Naive thymus-derived CD4-positive, alpha-beta T cell (primary cell): ENCODE measurements at regions of chr7 and their contacts with region 1.

Region 1: GRCh38 chr7:44973610-44974401 is 5.0 kb downstream of the MYO1G start:
- DNase-seq: peak in 7 of 9 donors; percentile 52 to 70 (median 66)
- ATAC-seq: peak; percentile 31
- H3K4me3 ChIP-seq: no peak overlapping the region
- H3K4me3 Mint-ChIP-seq: peak overlapping the region in 4 of 10 donors; percentile 5 to 23 (median 10)
- H3K27ac ChIP-seq: peak overlapping the region; percentile 83
- H3K27ac Mint-ChIP-seq: peak overlapping the region in 8 of 9 donors; percentile 18 to 88 (median 67)
- H3K4me1 ChIP-seq: peaks cover 28 to 46% of the 10 kb centered on the region in 2 donors
- H3K4me1 Mint-ChIP-seq: peaks cover 29 to 59% (median 40%) of the 10 kb centered on the region in 7 donors
- H3K27me3 ChIP-seq: no peaks in the 10 kb centered on the region
- H3K27me3 Mint-ChIP-seq: no peaks in the 10 kb centered on the region

Region 2: DNA sequence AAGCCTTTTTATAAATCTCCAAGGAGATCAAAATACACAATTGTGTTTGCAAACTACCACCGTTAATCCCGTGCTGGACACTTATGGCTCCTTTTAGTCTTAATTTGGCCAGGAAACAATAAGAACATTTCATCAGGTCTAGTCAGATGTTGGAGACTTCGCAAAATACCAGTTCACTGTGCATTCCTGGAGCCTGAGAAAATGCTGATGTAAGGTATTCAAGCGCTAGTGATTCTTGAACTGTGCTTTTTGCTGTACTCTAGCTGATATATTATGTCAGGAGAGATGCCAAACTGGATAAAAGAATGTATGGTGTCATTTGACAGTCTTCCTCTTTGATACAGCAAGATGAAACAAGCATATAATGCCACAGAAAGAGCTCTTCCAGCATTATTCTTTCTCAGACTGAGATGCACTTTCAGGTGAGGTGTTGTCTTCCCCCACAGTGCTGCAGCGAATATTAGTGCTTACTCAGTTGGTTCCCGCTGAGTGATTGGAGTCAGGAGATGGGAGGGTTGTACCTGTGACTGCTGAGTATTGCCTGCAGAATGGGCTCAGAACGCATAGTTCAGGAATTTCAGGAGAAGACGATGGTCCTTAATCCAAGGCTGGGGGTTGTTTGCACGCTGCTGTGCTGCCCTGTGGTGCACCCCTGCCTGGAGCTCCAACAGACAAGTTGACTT is 308.1 kb before region 1 on chr7:
- CTCF ChIA-PET with region 1: no interaction called
- POLR2A ChIA-PET with region 1: no interaction called
- intact Hi-C with region 1: no loop called
- DNase-seq: no peak
- ATAC-seq: no peak
- H3K4me3 ChIP-seq: no peak overlapping the region
- H3K4me3 Mint-ChIP-seq: no peak overlapping the region
- H3K27ac ChIP-seq: no peak overlapping the region
- H3K27ac Mint-ChIP-seq: peak overlapping the region in 4 of 9 donors; percentile 18 to 65 (median 45)
- H3K4me1 ChIP-seq: no peaks in the 10 kb centered on the region
- H3K4me1 Mint-ChIP-seq: peaks cover 0 to 9% (median 2%) of the 10 kb centered on the region in 7 donors
- H3K27me3 ChIP-seq: no peaks in the 10 kb centered on the region
- H3K27me3 Mint-ChIP-seq: no peaks in the 10 kb centered on the region

Region 3: GRCh38 chr7:44986218-44987053 is 12.6 kb after region 1 on chr7:
- CTCF ChIA-PET with region 1: interaction called, 7 read pairs
- POLR2A ChIA-PET with region 1: interaction called, 15 read pairs
- intact Hi-C with region 1: loop called (anchors 1 kb)
- DNase-seq: peak; percentile 93 to 97 (median 96)
- ATAC-seq: peak; percentile 98
- H3K4me3 ChIP-seq: peak overlapping the region; percentile 92
- H3K4me3 Mint-ChIP-seq: peak overlapping the region; percentile 94 to 100 (median 97)
- H3K27ac ChIP-seq: peak overlapping the region; percentile 97
- H3K27ac Mint-ChIP-seq: peak overlapping the region; percentile 97 to 99 (median 98)
- H3K4me1 ChIP-seq: peaks cover 25 to 33% of the 10 kb centered on the region in 2 donors
- H3K4me1 Mint-ChIP-seq: peaks cover 24 to 66% (median 56%) of the 10 kb centered on the region in 7 donors
- H3K27me3 ChIP-seq: no peaks in the 10 kb centered on the region
- H3K27me3 Mint-ChIP-seq: no peaks in the 10 kb centered on the region

Region 4: DNA sequence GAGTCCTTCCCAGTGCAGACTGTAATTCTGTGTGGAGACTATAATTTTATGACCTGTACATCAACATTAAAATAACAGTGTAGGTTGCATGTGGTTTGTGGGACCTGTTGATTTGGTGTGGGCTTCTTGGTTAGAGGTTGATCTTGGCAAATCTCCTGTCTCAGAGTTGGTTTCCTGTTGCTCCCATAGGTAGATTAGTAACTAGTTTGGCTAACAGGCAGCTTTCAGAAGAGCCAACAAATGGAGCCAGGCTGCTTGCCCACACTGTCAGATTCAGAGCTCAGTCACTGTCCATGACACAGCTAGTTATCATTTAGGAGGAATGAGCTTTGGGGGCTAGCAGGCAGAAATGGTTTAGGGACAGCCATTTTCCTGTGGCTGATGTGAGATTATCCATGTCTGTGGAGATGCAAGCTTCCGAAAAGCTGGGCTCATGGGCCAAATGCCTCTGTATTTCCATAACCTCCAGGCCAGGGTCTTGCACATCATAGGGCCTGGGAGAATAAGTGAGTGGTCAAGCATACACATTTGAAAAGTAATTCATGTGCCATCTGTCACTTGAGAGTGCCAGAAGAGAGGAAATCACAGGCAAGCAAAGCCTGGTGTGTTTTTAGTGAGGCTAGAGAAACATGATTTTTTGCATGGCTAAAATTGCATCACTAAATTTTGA is 59.6 kb after region 1 on chr7:
- CTCF ChIA-PET with region 1: interaction called, 65 read pairs
- POLR2A ChIA-PET with region 1: interaction called, 200 read pairs
- intact Hi-C with region 1: no loop called
- DNase-seq: no peak
- ATAC-seq: peak; percentile 12
- H3K4me3 ChIP-seq: peak overlapping the region; percentile 15
- H3K4me3 Mint-ChIP-seq: peak overlapping the region; percentile 76 to 93 (median 81)
- H3K27ac ChIP-seq: peak overlapping the region; percentile 43
- H3K27ac Mint-ChIP-seq: peak overlapping the region; percentile 48 to 94 (median 84)
- H3K4me1 ChIP-seq: peaks cover 67 to 81% of the 10 kb centered on the region in 2 donors
- H3K4me1 Mint-ChIP-seq: peaks cover 61 to 80% (median 75%) of the 10 kb centered on the region in 7 donors
- H3K27me3 ChIP-seq: no peaks in the 10 kb centered on the region
- H3K27me3 Mint-ChIP-seq: no peaks in the 10 kb centered on the region

Region 5: GRCh38 chr7:45039131-45039530 is 65.3 kb after region 1 on chr7:
- CTCF ChIA-PET with region 1: interaction called, 25 read pairs
- POLR2A ChIA-PET with region 1: interaction called, 200 read pairs
- intact Hi-C with region 1: no loop called
- DNase-seq: no peak
- ATAC-seq: no peak
- H3K4me3 ChIP-seq: no peak overlapping the region
- H3K4me3 Mint-ChIP-seq: no peak overlapping the region
- H3K27ac ChIP-seq: peak overlapping the region; percentile 30
- H3K27ac Mint-ChIP-seq: peak overlapping the region in 7 of 9 donors; percentile 42 to 94 (median 84)
- H3K4me1 ChIP-seq: peaks cover 36% of the 10 kb centered on the region in 2 donors
- H3K4me1 Mint-ChIP-seq: peaks cover 47 to 89% (median 81%) of the 10 kb centered on the region in 7 donors
- H3K27me3 ChIP-seq: no peaks in the 10 kb centered on the region
- H3K27me3 Mint-ChIP-seq: no peaks in the 10 kb centered on the region

Region 6: DNA sequence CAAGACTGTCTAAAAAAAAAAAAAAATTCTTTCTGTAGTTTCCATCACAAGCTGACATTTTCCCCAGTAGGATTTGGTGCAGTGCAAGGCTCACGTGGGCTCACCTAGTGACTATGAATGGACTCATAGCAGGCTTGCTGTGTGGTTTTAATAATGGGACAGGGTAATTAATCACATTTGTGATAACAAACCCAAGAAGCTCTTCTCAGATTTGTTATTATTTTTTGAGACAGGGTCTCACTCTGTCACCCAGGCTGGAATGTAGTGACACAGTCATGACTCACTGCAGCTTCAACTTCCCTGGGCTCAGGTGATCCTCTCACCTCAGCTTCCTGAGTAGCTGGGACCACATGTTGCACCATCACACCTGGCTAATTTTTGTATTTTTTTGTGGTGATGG is 74.9 kb after region 1 on chr7:
- CTCF ChIA-PET with region 1: interaction called, 17 read pairs
- POLR2A ChIA-PET with region 1: interaction called, 6 read pairs
- intact Hi-C with region 1: no loop called
- DNase-seq: no peak
- ATAC-seq: no peak
- H3K4me3 ChIP-seq: no peak overlapping the region
- H3K4me3 Mint-ChIP-seq: no peak overlapping the region
- H3K27ac ChIP-seq: peak overlapping the region; percentile 12
- H3K27ac Mint-ChIP-seq: peak overlapping the region in 4 of 9 donors; percentile 5 to 62 (median 24)
- H3K4me1 ChIP-seq: peaks cover 3 to 6% of the 10 kb centered on the region in 2 donors
- H3K4me1 Mint-ChIP-seq: peaks cover 33 to 77% (median 65%) of the 10 kb centered on the region in 7 donors
- H3K27me3 ChIP-seq: no peaks in the 10 kb centered on the region
- H3K27me3 Mint-ChIP-seq: no peaks in the 10 kb centered on the region

Region 7: GRCh38 chr7:45239486-45239885 is 265.7 kb after region 1 on chr7:
- CTCF ChIA-PET with region 1: no interaction called
- POLR2A ChIA-PET with region 1: no interaction called
- intact Hi-C with region 1: no loop called
- DNase-seq: no peak
- ATAC-seq: no peak
- H3K4me3 ChIP-seq: no peak overlapping the region
- H3K4me3 Mint-ChIP-seq: no peak overlapping the region
- H3K27ac ChIP-seq: no peak overlapping the region
- H3K27ac Mint-ChIP-seq: no peak overlapping the region
- H3K4me1 ChIP-seq: no peaks in the 10 kb centered on the region
- H3K4me1 Mint-ChIP-seq: peaks cover 0 to 5% (median 0%) of the 10 kb centered on the region in 7 donors
- H3K27me3 ChIP-seq: no peaks in the 10 kb centered on the region
- H3K27me3 Mint-ChIP-seq: peaks cover 25 to 49% (median 42%) of the 10 kb centered on the region in 5 donors